HCT116 (cell line): ENCODE measurements at regions of chr19 and their contacts with region 1.

Region 1: GRCh38 chr19:43668406-43669158 is 1.4 kb downstream of the PLAUR start:
- DNase-seq: peak; percentile 98
- ATAC-seq: peak; percentile 87
- H3K4me3 ChIP-seq: peak overlapping the region; percentile 79 to 94
- H3K27ac ChIP-seq: peak overlapping the region; percentile 89
- H3K4me1 ChIP-seq: peaks cover 21 to 40% of the 10 kb centered on the region in 2 experiments
- H3K27me3 ChIP-seq: no peaks in the 10 kb centered on the region
- CTCF ChIP-seq: no peak
- POLR2A ChIP-seq: peak; percentile 57
- RAD21 ChIP-seq: no peak

Region 2: GRCh38 chr19:43532962-43533545 is 135.5 kb before region 1 on chr19 and contains the start of gene ZNF575:
- CTCF ChIA-PET with region 1: no interaction called
- POLR2A ChIA-PET with region 1: interaction called, 4 read pairs
- RAD21 ChIA-PET with region 1: no interaction called
- intact Hi-C with region 1: loop called (anchors 10 kb)
- DNase-seq: peak; percentile 87
- ATAC-seq: peak; percentile 79
- H3K4me3 ChIP-seq: peak within 1 kb of the TSS; percentile 62 to 70
- H3K27ac ChIP-seq: peak within 1 kb of the TSS; percentile 95
- H3K4me1 ChIP-seq: peaks cover 27 to 52% of the 10 kb centered on the region in 2 experiments
- H3K27me3 ChIP-seq: no peaks in the 10 kb centered on the region
- CTCF ChIP-seq: no peak
- POLR2A ChIP-seq: no peak
- RAD21 ChIP-seq: no peak
- total RNA-seq, gene ZNF575: 1.9 TPM

Region 3: DNA sequence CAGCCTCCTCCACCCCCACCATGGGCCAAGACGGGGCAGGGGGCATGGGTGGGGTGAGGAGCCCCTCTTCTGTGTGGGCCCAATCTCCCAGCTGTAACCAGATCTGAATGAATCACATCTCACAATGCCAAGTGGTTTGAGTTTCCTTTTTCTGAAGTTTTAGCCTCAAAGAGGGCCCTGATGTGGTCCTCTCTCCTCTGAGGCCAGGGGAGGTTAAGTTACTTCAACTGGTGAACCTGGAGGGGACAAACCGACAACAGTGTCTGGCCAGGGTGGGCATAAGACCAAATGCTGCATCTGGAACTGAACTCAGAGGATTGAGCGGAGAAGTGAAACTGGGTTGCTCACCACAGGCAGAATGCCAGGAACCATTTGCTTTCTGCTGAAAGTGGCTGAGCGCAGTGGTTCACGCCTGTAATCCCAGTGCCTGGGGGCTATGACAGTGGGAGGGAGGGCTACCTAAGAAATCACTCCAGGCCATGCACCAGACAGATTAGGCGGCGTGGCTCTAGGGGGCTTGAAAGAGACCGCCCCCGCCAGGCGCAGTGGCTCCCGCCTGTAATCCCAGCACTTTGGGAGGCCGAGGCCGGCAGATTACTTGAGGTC is 31.9 kb after region 1 on chr19:
- CTCF ChIA-PET with region 1: interaction called, 3 read pairs
- POLR2A ChIA-PET with region 1: interaction called, 11 read pairs
- RAD21 ChIA-PET with region 1: interaction called in 1 of 2 experiments, 3 read pairs
- intact Hi-C with region 1: loop called (anchors 5 kb)
- DNase-seq: no peak
- ATAC-seq: peak; percentile 39
- H3K4me3 ChIP-seq: peak overlapping the region; percentile 6 to 55
- H3K27ac ChIP-seq: peak overlapping the region; percentile 53
- H3K4me1 ChIP-seq: peaks cover 42 to 58% of the 10 kb centered on the region in 2 experiments
- H3K27me3 ChIP-seq: no peaks in the 10 kb centered on the region
- CTCF ChIP-seq: no peak
- POLR2A ChIP-seq: no peak
- RAD21 ChIP-seq: no peak

Region 4: DNA sequence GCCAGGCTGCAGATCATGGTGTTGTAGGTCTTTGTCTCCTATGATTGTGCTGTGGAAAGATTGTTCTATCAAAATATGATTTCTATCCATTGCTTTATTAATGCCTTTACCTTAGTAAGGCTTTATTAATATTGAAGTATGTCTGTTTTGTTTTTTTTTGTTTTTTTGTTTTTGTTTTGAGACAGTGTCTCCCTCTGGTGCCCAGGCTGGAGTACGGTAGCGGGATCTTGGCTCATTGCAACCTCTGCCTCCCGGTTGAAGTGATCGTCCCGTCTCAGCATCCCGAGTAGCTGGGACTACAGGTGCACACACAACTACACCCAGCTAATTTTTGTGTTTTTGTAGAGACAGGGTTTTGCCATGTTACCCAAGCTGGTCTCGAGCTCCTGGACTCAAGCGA is 55.0 kb after region 1 on chr19:
- CTCF ChIA-PET with region 1: interaction called, 38 read pairs
- POLR2A ChIA-PET with region 1: interaction called, 53 read pairs
- RAD21 ChIA-PET with region 1: interaction called, 5 to 7 read pairs
- intact Hi-C with region 1: loop called (anchors 1 kb)
- DNase-seq: peak; percentile 33
- ATAC-seq: peak; percentile 81
- H3K4me3 ChIP-seq: no peak overlapping the region
- H3K27ac ChIP-seq: no peak overlapping the region
- H3K4me1 ChIP-seq: peaks cover 4 to 11% of the 10 kb centered on the region in 2 experiments; a peak in 3 of 4 replicates
- H3K27me3 ChIP-seq: no peaks in the 10 kb centered on the region
- CTCF ChIP-seq: peak; percentile 78 to 80 (median 79); a peak in 5 of 6 replicates
- POLR2A ChIP-seq: no peak
- RAD21 ChIP-seq: peak; percentile 90

Region 5: DNA sequence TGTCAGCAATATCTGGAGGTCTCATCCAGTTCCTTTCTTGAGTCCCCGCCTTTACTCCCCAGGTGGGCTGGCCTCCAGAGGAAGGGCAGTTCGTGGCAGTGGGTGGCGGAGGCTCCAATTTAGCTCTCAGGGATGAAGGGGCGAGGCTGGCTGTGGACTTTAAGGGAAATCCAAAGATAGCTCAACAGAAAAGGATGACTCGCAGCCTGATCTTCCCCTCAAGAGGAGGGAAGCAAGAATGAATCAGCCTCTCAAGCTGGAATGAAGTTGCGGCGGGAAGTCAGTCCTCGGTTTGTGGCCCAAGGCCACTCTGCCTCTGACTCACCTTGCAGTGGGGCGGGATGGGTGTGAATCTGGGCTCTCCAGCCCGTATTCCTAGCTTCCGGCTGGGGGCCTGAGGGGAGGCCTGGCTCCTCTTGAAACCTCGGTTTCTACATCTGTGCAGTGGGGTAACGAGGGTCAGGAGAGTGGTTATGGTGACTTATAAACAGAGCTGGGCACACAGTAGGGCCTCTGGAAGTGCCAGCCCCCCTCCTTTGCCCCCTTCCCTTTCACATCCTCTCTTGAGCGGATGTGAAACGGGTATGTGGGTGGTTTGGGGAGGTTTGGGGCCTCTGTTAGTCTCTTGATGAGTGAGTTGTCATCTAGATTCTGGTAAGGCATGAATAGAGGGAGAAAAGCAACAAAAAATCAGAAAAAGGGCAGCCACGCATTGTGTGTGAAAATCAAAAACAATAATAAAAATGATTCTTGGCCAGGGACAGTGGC is 96.7 kb after region 1 on chr19:
- CTCF ChIA-PET with region 1: interaction called, 14 read pairs
- POLR2A ChIA-PET with region 1: interaction called, 13 read pairs
- RAD21 ChIA-PET with region 1: no interaction called
- intact Hi-C with region 1: no loop called
- DNase-seq: peak; percentile 93
- ATAC-seq: peak; percentile 80
- H3K4me3 ChIP-seq: peak overlapping the region in 1 of 2 experiments; percentile 12; a peak in 2 of 4 replicates
- H3K27ac ChIP-seq: peak overlapping the region; percentile 98
- H3K4me1 ChIP-seq: peaks cover 67 to 84% of the 10 kb centered on the region in 2 experiments
- H3K27me3 ChIP-seq: no peaks in the 10 kb centered on the region
- CTCF ChIP-seq: no peak
- POLR2A ChIP-seq: no peak
- RAD21 ChIP-seq: peak; percentile 42